ENCODE measurements at regions of chr12 and their contacts with region 1.

Region 1: DNA sequence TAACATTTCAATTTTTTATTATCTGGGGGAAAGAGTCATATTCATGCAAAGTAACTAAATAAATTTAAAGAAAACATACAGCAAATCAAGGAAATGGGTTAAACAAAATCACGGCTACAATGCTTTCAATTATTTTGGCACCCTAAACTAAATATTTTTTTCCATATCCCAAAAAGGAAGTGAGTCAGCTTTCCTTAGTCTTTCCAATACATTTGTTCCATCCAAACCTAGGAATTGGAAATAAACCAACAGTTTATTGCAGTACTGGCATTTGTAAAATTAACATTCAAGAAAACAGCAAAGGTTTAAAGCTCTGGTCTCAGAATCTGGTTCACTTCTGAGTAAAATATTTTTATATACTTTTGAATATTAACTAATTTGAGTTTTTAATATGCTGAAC is 89.2 kb downstream of the BCL2L14 start:
- DNase-seq: no peak
- ATAC-seq: no peak
- H3K4me3 ChIP-seq: no peak overlapping the region
- H3K27ac ChIP-seq: peak overlapping the region; percentile 56
- H3K4me1 ChIP-seq: peaks cover 22% of the 10 kb centered on the region
- H3K27me3 ChIP-seq: no peaks in the 10 kb centered on the region
- CTCF ChIP-seq: no peak

Region 2: GRCh38 chr12:11758510-11759493 is 401.2 kb before region 1 on chr12:
- intact Hi-C with region 1: no loop called
- DNase-seq: no peak
- ATAC-seq: peak; percentile 55 to 77 (median 62)
- H3K4me3 ChIP-seq: no peak overlapping the region
- H3K27ac ChIP-seq: peak overlapping the region; percentile 77
- H3K4me1 ChIP-seq: peaks cover 52% of the 10 kb centered on the region
- H3K27me3 ChIP-seq: no peaks in the 10 kb centered on the region
- CTCF ChIP-seq: no peak

Region 3: DNA sequence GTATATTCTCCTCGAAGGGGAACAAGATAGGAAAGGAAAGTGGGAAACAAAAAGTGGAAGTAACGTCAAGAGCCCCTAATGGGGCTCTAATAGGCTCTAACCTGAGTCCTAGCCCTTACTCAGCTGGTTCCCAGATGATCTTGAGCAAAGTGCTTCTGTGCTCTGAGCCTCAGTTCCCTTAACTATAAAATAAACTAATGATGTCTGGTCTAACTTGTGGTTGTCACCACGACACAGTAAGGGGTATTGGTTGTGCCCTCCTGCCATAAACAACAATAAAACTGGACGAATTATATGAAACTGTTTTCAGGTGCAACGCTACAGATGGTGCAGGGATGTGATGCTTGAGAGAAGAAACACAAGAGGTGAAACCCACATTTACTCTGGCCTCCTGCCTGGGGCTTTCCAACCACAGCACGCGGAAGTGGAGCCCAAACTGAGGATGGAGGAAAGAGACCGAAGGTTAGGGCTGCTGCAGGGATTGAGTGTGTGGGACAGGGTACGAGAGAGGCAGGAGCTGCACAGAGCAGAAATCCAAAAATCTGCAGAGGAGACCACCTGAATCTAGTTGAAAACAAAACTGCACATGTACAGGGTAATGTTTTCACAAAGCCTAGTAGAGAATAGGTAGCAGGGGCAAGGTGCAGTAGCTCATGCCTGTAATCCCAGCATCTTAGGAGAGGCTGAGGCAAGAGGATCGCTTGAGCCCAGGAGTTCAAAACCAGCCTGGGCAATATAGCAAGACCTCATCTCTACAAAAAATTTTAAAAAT is 134.9 kb before region 1 on chr12:
- intact Hi-C with region 1: no loop called
- DNase-seq: no peak
- ATAC-seq: no peak
- H3K4me3 ChIP-seq: no peak overlapping the region
- H3K27ac ChIP-seq: no peak overlapping the region
- H3K4me1 ChIP-seq: no peaks in the 10 kb centered on the region
- H3K27me3 ChIP-seq: no peaks in the 10 kb centered on the region
- CTCF ChIP-seq: no peak

Region 4: DNA sequence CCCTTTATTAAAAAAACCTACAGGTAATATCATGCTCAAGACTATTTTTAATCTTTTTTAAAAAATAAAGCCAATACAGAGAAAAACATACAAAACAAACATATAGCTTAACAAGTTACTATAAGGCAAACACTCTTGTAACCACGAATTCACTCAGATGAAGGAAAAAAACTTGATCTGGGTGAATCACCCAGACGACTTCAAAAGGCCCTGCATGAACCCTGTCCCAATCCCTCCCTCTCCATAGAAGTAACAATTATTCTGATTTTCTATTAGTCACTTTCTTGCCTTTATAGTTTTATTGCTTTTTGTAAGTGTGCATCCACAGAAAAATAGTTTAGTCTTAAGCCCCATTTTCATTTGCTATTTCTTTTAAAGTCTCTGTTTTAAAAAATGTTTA is 34.2 kb after region 1 on chr12:
- intact Hi-C with region 1: loop called in 1 of 2 experiments (anchors 5 kb)
- DNase-seq: no peak
- ATAC-seq: no peak
- H3K4me3 ChIP-seq: no peak overlapping the region
- H3K27ac ChIP-seq: no peak overlapping the region
- H3K4me1 ChIP-seq: peaks cover 21% of the 10 kb centered on the region
- H3K27me3 ChIP-seq: no peaks in the 10 kb centered on the region
- CTCF ChIP-seq: no peak

Region 5: DNA sequence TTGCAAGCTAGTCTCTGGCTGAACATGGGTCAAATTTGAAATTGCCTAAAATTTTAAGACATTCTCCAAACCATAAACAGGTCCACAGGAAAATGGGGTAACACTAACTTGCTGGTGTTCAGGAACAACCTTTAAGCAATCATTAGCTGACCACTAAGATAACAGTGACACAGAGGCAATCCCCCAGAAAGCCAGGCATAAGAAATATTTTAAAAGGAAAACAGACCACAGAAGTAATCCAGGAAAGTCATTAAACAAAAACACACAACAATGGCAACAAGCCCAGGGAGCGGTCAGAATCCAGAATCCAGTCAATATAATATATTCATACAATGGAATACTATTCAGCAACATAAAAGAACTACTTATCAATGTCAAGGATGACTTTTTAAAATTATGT is 47.8 kb after region 1 on chr12:
- intact Hi-C with region 1: no loop called
- DNase-seq: no peak
- ATAC-seq: no peak
- H3K4me3 ChIP-seq: no peak overlapping the region
- H3K27ac ChIP-seq: no peak overlapping the region
- H3K4me1 ChIP-seq: peaks cover 12% of the 10 kb centered on the region
- H3K27me3 ChIP-seq: no peaks in the 10 kb centered on the region
- CTCF ChIP-seq: no peak

Region 6: GRCh38 chr12:12334367-12335040 is 174.5 kb after region 1 on chr12:
- intact Hi-C with region 1: loop called in 1 of 2 experiments (anchors 5 kb)
- DNase-seq: peak; percentile 32 to 73
- ATAC-seq: peak; percentile 60 to 88 (median 73)
- H3K4me3 ChIP-seq: no peak overlapping the region
- H3K27ac ChIP-seq: no peak overlapping the region
- H3K4me1 ChIP-seq: no peaks in the 10 kb centered on the region
- H3K27me3 ChIP-seq: no peaks in the 10 kb centered on the region
- CTCF ChIP-seq: peak; percentile 86